Left lung (tissue), 14 donors: ENCODE measurements at regions of chr7 and their contacts with region 1.

Region 1: DNA sequence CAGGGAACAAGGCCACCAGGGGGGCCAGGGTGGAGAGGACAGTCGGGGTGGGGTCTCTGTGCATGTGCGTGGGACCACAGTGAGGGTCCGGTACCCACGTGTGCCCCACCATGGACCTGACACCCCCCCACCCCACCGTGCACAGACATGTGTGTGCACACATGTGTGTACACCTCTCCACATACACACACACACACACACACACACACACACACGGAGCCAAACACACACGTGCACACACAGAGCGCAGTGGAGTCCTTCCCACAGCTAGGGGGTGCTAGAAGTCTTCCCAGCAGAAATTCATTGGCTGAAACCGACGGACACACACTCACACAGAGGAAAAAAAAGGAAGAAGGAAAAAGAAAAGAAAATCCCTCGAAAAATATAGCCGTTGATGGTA is 42.8 kb upstream of the GNA12 start:
- DNase-seq: peak in 1 of 4 donors; percentile 76
- ATAC-seq: peak; percentile 94
- H3K4me3 ChIP-seq: no peak overlapping the region
- H3K27ac ChIP-seq: no peak overlapping the region
- H3K4me1 ChIP-seq: no peaks in the 10 kb centered on the region
- H3K27me3 ChIP-seq: no peaks in the 10 kb centered on the region
- CTCF ChIP-seq: peak in 1 of 2 donors; percentile 56

Region 2: GRCh38 chr7:3154912-3155494 is 268.1 kb after region 1 on chr7:
- intact Hi-C with region 1: loop called in 1 of 2 experiments (anchors 10 kb)
- DNase-seq: peak in 1 of 4 donors; percentile 24
- ATAC-seq: peak; percentile 82
- H3K4me3 ChIP-seq: no peak overlapping the region
- H3K27ac ChIP-seq: no peak overlapping the region
- H3K4me1 ChIP-seq: no peaks in the 10 kb centered on the region
- H3K27me3 ChIP-seq: peaks cover 0 to 32% of the 10 kb centered on the region in 2 donors
- CTCF ChIP-seq: peak; percentile 36 to 58